ENCODE measurements at regions of chr16 and their contacts with region 1.

Region 1: DNA sequence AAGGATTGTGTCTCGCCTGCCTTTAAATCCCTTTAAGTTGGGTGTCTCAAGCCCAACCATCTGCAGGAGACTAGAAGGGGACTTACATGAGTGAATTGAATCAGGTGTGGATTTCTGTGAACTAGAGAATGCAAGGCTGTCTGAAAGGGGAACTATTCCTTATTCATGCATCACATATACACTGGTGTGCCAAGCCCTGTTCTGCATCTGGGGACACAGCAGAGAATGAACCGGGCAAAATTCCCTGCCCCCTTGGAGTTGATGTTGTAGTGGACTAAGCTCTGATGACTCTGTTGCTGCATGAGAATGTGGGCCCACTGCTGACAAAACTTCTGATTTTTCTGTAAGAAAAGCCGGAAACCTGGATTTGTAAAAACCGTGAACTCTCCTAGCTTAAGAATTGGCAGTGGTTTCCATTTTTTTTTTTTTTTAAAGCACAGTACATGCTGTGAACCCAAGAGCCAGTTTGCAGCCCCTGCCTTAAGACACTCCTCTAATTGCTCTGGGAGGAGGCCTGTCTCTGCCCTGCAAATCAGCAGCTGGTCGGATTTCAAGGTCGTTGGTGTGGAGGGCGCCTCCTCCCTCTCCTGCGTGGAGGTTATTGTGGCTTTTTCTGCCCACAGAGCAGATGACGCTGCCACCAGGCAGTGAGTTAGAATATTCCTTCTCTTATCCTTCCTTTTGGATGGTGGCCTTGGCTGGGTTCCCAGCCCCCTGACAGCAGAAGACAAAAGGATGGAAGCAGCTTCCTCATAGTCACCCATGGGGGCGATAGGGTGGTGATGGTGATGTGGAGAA is 131.0 kb downstream of the PRKCB start:
- DNase-seq: peak in 2 of 3 donors; percentile 10 to 13
- H3K4me3 ChIP-seq: no peak overlapping the region
- H3K4me3 Mint-ChIP-seq: no peak overlapping the region
- H3K27ac ChIP-seq: peak overlapping the region in 1 of 2 donors; percentile 28
- H3K27ac Mint-ChIP-seq: peak overlapping the region in 6 of 7 donors; percentile 25 to 74 (median 49)
- H3K4me1 ChIP-seq: peaks cover 19 to 22% of the 10 kb centered on the region in 2 donors
- H3K4me1 Mint-ChIP-seq: peaks cover 31% of the 10 kb centered on the region
- H3K27me3 ChIP-seq: no peaks in the 10 kb centered on the region
- H3K27me3 Mint-ChIP-seq: peaks cover 0 to 2% (median 2%) of the 10 kb centered on the region in 3 donors
- CTCF ChIP-seq: no peak

Region 2: GRCh38 chr16:24010440-24011089 is 43.8 kb after region 1 on chr16:
- intact Hi-C with region 1: loop called in 1 of 2 experiments (anchors 5 kb)
- DNase-seq: peak; percentile 75 to 83 (median 78)
- H3K4me3 ChIP-seq: no peak overlapping the region
- H3K4me3 Mint-ChIP-seq: no peak overlapping the region
- H3K27ac ChIP-seq: peak overlapping the region in 1 of 2 donors; percentile 67
- H3K27ac Mint-ChIP-seq: peak overlapping the region; percentile 55 to 93 (median 84)
- H3K4me1 ChIP-seq: peaks cover 49 to 62% of the 10 kb centered on the region in 2 donors
- H3K4me1 Mint-ChIP-seq: peaks cover 69% of the 10 kb centered on the region
- H3K27me3 ChIP-seq: no peaks in the 10 kb centered on the region
- H3K27me3 Mint-ChIP-seq: no peaks in the 10 kb centered on the region
- CTCF ChIP-seq: peak; percentile 94